ENCODE measurements at regions of chr18 and their contacts with region 1.

Region 1: DNA sequence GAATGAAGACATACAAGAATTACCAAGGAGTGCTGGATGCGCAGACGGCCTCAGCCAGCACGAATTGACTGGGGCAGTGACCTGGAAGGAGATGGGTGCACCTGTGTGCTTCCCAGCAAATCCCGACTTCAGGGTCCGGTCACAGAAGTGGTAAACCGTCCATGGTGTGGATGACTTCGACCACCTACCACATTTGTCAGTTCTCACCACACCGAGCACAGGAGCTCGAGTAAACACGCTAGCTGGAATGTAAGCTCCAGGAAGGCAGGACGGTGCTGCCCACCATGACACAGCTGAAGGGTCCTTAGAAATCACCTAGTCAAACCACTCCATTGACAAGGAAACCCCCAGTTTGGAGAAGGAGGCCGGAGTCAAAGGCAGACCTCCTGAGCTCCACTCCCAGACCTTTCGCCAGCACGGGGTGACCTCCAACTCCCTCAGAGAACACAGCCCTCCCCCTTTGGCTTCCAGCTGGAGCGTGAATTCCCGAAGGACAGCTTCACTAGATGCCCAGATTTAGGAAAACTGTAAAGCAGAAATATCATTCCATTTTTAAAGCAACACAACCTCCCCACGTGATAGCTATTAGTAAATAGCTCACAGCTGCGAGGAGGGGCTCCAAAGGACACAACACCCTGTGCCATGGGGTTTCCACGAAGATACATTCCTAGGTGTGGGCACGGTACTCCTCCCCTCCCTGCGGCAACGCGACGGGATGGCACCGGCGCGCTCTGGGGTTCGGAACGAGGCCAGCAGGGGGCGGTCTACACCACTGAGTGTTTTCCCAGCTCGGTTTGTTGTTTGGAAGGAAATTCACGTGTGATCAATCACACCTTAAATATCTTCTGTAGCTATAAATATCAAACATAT is 34.1 kb upstream of the GNAL start:
- DNase-seq: peak; percentile 4
- ATAC-seq: peak; percentile 93
- H3K4me3 ChIP-seq: no peak overlapping the region
- H3K27ac ChIP-seq: no peak overlapping the region
- H3K4me1 ChIP-seq: no peaks in the 10 kb centered on the region
- H3K27me3 ChIP-seq: peaks cover 44% of the 10 kb centered on the region
- CTCF ChIP-seq: peak; percentile 64
- POLR2A ChIP-seq: no peak
- RAD21 ChIP-seq: peak; percentile 75

Region 2: GRCh38 chr18:11665587-11665986 is 10.6 kb after region 1 on chr18:
- CTCF ChIA-PET with region 1: interaction called, 11 read pairs
- POLR2A ChIA-PET with region 1: no interaction called
- dilution Hi-C with region 1: no loop called
- in situ Hi-C with region 1: no loop called
- intact Hi-C with region 1: no loop called
- DNase-seq: no peak
- ATAC-seq: no peak
- H3K4me3 ChIP-seq: no peak overlapping the region
- H3K27ac ChIP-seq: no peak overlapping the region
- H3K4me1 ChIP-seq: no peaks in the 10 kb centered on the region
- H3K27me3 ChIP-seq: peaks cover 46% of the 10 kb centered on the region
- CTCF ChIP-seq: no peak
- POLR2A ChIP-seq: no peak
- RAD21 ChIP-seq: no peak

Region 3: GRCh38 chr18:11995445-11996189 is 340.6 kb after region 1 on chr18:
- CTCF ChIA-PET with region 1: interaction called, 3 read pairs
- POLR2A ChIA-PET with region 1: no interaction called
- dilution Hi-C with region 1: no loop called
- in situ Hi-C with region 1: no loop called
- intact Hi-C with region 1: loop called (anchors 5 kb)
- DNase-seq: peak; percentile 77
- ATAC-seq: peak; percentile 88
- H3K4me3 ChIP-seq: no peak overlapping the region
- H3K27ac ChIP-seq: no peak overlapping the region
- H3K4me1 ChIP-seq: peaks cover 11% of the 10 kb centered on the region
- H3K27me3 ChIP-seq: no peaks in the 10 kb centered on the region
- CTCF ChIP-seq: peak; percentile 90
- POLR2A ChIP-seq: 0 out of 2 replicates have a peak, but pooled peaks have one; percentile 22
- RAD21 ChIP-seq: peak; percentile 95

Region 4: GRCh38 chr18:12236934-12237832 is 582.2 kb after region 1 on chr18:
- CTCF ChIA-PET with region 1: interaction called, 3 read pairs
- POLR2A ChIA-PET with region 1: no interaction called
- dilution Hi-C with region 1: no loop called
- in situ Hi-C with region 1: no loop called
- intact Hi-C with region 1: loop called (anchors 1 kb)
- DNase-seq: peak; percentile 36
- ATAC-seq: peak; percentile 96
- H3K4me3 ChIP-seq: no peak overlapping the region
- H3K27ac ChIP-seq: no peak overlapping the region
- H3K4me1 ChIP-seq: peaks cover 6% of the 10 kb centered on the region
- H3K27me3 ChIP-seq: peaks cover 10% of the 10 kb centered on the region
- CTCF ChIP-seq: peak; percentile 76
- POLR2A ChIP-seq: no peak
- RAD21 ChIP-seq: peak; percentile 57